Panc1 (cell line): ENCODE measurements at regions of chr4 and their contacts with region 1.

Region 1: GRCh38 chr4:139453371-139454110 is 380 bp upstream of the RAB33B start:
- DNase-seq: peak; percentile 83
- ATAC-seq: peak; percentile 96
- H3K4me3 ChIP-seq: peak overlapping the region; percentile 71 to 95
- H3K27ac ChIP-seq: peak overlapping the region; percentile 92
- H3K4me1 ChIP-seq: peaks cover 19% of the 10 kb centered on the region
- H3K27me3 ChIP-seq: no peaks in the 10 kb centered on the region
- CTCF ChIP-seq: peak; percentile 32; the same call in 1 of the 2 replicates

Region 2: DNA sequence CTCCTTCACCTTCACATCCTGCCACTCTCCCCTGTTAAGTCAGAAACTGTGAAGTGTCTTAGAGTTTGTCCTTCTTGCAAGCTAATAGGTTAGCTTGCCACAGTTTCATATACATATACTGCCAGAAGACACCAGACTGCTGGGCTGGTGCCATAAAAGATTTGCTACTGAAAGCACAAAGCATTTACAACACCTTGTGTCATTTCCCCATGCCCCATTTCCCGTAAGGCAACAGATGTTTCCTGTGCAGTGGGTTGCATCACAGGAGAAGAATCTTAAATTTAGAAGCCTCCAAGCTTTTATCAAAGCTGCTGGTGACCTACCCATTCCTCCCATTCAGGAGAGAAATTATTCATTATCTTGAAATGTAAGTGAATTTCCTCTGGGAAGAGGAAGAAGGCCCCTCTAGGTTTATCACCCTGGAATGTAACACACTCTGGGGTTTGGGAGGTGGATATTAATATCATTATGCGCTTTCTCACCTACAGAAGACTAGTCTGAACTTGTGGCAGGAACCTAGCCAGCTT is 34.1 kb before region 1 on chr4:
- CTCF ChIA-PET with region 1: no interaction called
- POLR2A ChIA-PET with region 1: no interaction called
- in situ Hi-C with region 1: no loop called
- intact Hi-C with region 1: no loop called
- DNase-seq: no peak
- ATAC-seq: no peak
- H3K4me3 ChIP-seq: no peak overlapping the region
- H3K27ac ChIP-seq: no peak overlapping the region
- H3K4me1 ChIP-seq: no peaks in the 10 kb centered on the region
- H3K27me3 ChIP-seq: no peaks in the 10 kb centered on the region
- CTCF ChIP-seq: no peak

Region 3: GRCh38 chr4:139530833-139531427 is 77.4 kb after region 1 on chr4:
- CTCF ChIA-PET with region 1: no interaction called
- POLR2A ChIA-PET with region 1: no interaction called
- in situ Hi-C with region 1: no loop called
- intact Hi-C with region 1: loop called (anchors 10 kb)
- DNase-seq: no peak
- ATAC-seq: peak; percentile 84
- H3K4me3 ChIP-seq: no peak overlapping the region
- H3K27ac ChIP-seq: no peak overlapping the region
- H3K4me1 ChIP-seq: no peaks in the 10 kb centered on the region
- H3K27me3 ChIP-seq: no peaks in the 10 kb centered on the region
- CTCF ChIP-seq: peak; percentile 83